ENCODE measurements at regions of chr7 and their contacts with region 1.

Region 1: DNA sequence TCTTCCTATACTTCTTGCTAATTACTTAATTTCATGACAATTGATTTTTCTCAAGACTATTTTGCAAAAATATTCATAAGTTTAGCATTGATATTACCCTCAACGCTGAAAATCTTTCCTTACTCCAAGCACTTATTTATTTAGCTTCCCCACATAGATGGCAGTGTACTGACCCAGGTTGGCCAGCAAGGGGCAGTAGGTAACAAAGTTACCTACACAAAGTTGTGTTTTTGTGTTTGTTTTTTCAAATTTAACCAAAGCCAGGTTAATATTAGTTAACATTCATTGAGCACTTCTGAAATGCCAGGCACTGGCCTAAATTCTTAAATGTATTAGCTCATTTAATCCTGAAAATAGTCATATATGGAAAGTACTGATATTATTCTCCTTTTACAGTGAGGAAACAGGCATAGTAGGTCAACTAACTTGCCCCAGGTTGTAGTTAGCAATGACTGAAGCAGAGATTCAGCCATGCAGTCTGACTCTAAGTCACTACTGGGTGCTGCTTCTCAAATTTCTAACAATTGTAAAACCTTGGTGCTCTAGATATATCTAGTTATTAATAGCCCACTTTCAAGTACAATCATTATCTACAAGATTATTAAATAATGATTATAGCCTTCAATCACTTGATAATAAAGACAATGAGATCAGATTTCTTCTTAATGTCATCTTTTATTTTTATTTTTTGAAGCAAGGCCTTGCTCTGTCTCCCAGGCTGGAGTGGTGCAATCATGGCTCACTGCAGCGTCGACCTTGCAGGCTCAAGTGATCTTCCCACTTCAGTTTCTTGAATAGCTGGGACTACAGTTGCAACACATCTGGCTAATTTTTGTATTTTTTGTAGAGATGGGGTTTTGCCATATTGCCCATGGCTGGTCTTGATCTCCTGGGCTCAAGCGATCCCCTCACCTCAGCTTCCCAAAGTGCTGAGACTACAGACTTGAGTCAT is 5.8 kb upstream of the GGCT start:
- DNase-seq: peak; percentile 61
- ATAC-seq: peak; percentile 66
- H3K4me3 ChIP-seq: no peak overlapping the region
- H3K27ac ChIP-seq: no peak overlapping the region
- H3K4me1 ChIP-seq: peaks cover 15% of the 10 kb centered on the region; the same call in 1 of the 2 replicates
- H3K27me3 ChIP-seq: no peaks in the 10 kb centered on the region
- CTCF ChIP-seq: peak; percentile 91

Region 2: DNA sequence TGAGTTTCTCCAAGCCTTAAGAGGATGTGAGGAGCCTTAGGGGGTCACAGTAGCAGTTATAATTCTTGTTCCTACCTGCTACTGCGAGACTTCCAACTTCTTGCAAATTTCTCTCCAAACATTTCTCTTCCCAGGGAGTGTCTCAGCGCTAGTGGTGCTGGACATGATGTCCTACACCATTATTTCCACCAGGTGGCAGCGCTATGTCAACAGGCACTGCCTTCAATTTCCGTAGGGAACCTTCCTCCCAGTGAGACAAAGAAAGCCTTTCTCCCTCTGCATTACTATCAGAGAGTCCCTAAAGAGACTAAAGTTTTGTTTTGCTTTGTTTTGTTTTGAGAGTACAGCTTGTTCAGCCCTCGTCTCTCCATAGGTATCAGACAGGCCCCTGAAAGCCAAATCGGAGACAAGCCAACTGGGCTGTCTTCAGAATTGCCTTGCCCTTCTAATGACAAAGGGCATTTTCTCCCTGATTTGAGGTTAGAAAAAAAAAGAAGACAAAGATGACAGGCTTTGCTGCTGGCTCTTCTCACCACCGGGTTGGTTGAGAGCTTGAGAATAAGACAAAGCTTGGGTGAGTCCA is 38.5 kb after region 1 on chr7:
- CTCF ChIA-PET with region 1: no interaction called
- POLR2A ChIA-PET with region 1: no interaction called
- intact Hi-C with region 1: loop called (anchors 1 kb)
- DNase-seq: peak; percentile 84
- ATAC-seq: peak; percentile 71
- H3K4me3 ChIP-seq: no peak overlapping the region
- H3K27ac ChIP-seq: peak overlapping the region; percentile 96
- H3K4me1 ChIP-seq: peaks cover 32% of the 10 kb centered on the region
- H3K27me3 ChIP-seq: no peaks in the 10 kb centered on the region
- CTCF ChIP-seq: peak; percentile 82